CD8-positive, alpha-beta T cell (primary cell): ENCODE measurements at regions of chr2 and their contacts with region 1.

Region 1: GRCh38 chr2:44244129-44244871 is 31.0 kb upstream of the SLC3A1 start:
- DNase-seq: peak; percentile 13 to 86 (median 54)
- ATAC-seq: peak; percentile 92
- H3K4me3 ChIP-seq: peak overlapping the region; percentile 12 to 57
- H3K4me3 Mint-ChIP-seq: peak overlapping the region; percentile 88
- H3K27ac ChIP-seq: peak overlapping the region in 1 of 2 experiments; percentile 26
- H3K27ac Mint-ChIP-seq: peak overlapping the region; percentile 69
- H3K4me1 ChIP-seq: peaks cover 12% of the 10 kb centered on the region
- H3K4me1 Mint-ChIP-seq: peaks cover 33% of the 10 kb centered on the region
- H3K27me3 ChIP-seq: no peaks in the 10 kb centered on the region
- H3K27me3 Mint-ChIP-seq: no peaks in the 10 kb centered on the region
- CTCF ChIP-seq: peak; percentile 86

Region 2: DNA sequence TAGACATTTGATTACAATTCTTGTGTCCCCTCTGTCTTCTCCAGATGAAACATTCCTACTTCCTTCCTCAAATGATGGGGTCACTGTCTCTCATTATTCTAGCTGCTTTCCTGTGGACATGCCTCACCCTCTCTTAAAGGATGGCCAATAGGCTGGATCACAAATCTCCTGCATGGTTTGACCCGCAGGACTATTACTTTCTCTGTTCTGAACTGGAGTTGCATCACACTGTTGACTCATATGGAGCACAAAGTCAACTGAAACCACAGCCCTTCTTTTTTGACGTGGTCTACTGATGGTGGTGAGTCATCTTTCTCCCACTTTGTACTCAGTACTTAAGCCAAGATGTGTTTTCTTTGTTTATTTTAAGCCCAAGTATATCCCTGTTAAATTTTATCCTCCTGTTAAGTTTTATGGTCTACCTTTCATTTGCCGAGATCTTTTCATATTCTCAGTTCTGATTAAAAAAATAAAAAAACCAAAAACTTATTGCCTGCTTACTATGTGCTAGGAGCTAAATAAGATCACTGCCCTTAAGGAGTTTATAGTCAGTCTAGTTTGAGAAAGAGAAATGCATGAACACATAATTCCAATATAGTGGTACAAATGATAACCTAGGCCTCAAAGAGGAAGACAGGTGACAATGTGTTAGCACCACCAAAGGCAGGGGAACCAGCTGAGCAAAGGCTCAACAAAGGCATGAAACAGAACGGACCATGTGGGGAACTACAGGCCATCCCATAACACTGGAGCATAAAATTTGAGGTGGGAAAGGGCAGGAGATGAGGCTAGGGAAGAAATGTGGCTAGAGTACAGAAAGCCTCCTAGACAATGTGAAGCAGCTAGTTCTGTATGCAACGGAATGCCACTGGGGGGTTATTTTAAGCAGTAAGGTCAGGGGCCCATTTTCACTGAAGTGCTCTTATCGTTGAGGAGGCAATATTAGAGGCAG is 950.3 kb before region 1 on chr2:
- CTCF ChIA-PET with region 1: no interaction called
- POLR2A ChIA-PET with region 1: no interaction called
- intact Hi-C with region 1: no loop called
- DNase-seq: peak in 6 of 9 experiments; percentile 7 to 62 (median 40)
- ATAC-seq: peak; percentile 80
- H3K4me3 ChIP-seq: no peak overlapping the region
- H3K4me3 Mint-ChIP-seq: no peak overlapping the region
- H3K27ac ChIP-seq: no peak overlapping the region
- H3K27ac Mint-ChIP-seq: no peak overlapping the region
- H3K4me1 ChIP-seq: no peaks in the 10 kb centered on the region
- H3K4me1 Mint-ChIP-seq: peaks cover 14% of the 10 kb centered on the region
- H3K27me3 ChIP-seq: no peaks in the 10 kb centered on the region
- H3K27me3 Mint-ChIP-seq: no peaks in the 10 kb centered on the region
- CTCF ChIP-seq: no peak

Region 3: GRCh38 chr2:44291281-44292248 is 47.3 kb after region 1 on chr2:
- CTCF ChIA-PET with region 1: interaction called, 7 read pairs
- POLR2A ChIA-PET with region 1: no interaction called
- intact Hi-C with region 1: loop called in 1 of 2 experiments (anchors 10 kb)
- DNase-seq: peak in 2 of 9 experiments; percentile 6 to 21
- ATAC-seq: no peak
- H3K4me3 ChIP-seq: no peak overlapping the region
- H3K4me3 Mint-ChIP-seq: no peak overlapping the region
- H3K27ac ChIP-seq: no peak overlapping the region
- H3K27ac Mint-ChIP-seq: no peak overlapping the region
- H3K4me1 ChIP-seq: no peaks in the 10 kb centered on the region
- H3K4me1 Mint-ChIP-seq: peaks cover 9% of the 10 kb centered on the region
- H3K27me3 ChIP-seq: no peaks in the 10 kb centered on the region
- H3K27me3 Mint-ChIP-seq: peaks cover 11% of the 10 kb centered on the region
- CTCF ChIP-seq: no peak

Region 4: DNA sequence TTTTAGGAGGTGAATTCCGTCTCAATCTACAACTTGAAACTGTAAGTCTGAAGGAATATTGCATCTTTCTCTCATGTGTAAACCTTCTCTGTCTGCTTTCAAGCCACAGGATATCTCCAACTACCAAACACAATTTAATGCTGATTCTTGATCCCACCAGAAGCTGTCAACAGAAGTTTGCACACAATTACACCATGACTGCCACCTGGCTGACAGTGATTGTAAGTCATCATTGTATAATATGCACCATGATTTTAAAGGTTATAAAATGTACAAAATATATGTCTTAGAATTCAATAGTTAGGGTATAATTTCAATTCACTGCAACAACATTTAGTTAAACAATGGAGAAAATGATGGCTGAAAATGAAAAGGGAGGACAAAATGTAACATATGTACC is 98.6 kb after region 1 on chr2:
- CTCF ChIA-PET with region 1: interaction called, 9 read pairs
- POLR2A ChIA-PET with region 1: no interaction called
- intact Hi-C with region 1: loop called (anchors 1 to 5 kb)
- DNase-seq: peak in 4 of 9 experiments; percentile 25 to 62 (median 48)
- ATAC-seq: peak; percentile 62
- H3K4me3 ChIP-seq: no peak overlapping the region
- H3K4me3 Mint-ChIP-seq: no peak overlapping the region
- H3K27ac ChIP-seq: no peak overlapping the region
- H3K27ac Mint-ChIP-seq: no peak overlapping the region
- H3K4me1 ChIP-seq: no peaks in the 10 kb centered on the region
- H3K4me1 Mint-ChIP-seq: peaks cover 2% of the 10 kb centered on the region
- H3K27me3 ChIP-seq: no peaks in the 10 kb centered on the region
- H3K27me3 Mint-ChIP-seq: no peaks in the 10 kb centered on the region
- CTCF ChIP-seq: peak; percentile 61

Region 5: GRCh38 chr2:44897406-44897805 is 653.1 kb after region 1 on chr2:
- CTCF ChIA-PET with region 1: no interaction called
- POLR2A ChIA-PET with region 1: no interaction called
- intact Hi-C with region 1: no loop called
- DNase-seq: no peak
- ATAC-seq: no peak
- H3K4me3 ChIP-seq: no peak overlapping the region
- H3K4me3 Mint-ChIP-seq: no peak overlapping the region
- H3K27ac ChIP-seq: no peak overlapping the region
- H3K27ac Mint-ChIP-seq: no peak overlapping the region
- H3K4me1 ChIP-seq: no peaks in the 10 kb centered on the region
- H3K4me1 Mint-ChIP-seq: no peaks in the 10 kb centered on the region
- H3K27me3 ChIP-seq: no peaks in the 10 kb centered on the region
- H3K27me3 Mint-ChIP-seq: peaks cover 17% of the 10 kb centered on the region
- CTCF ChIP-seq: no peak

Region 6: DNA sequence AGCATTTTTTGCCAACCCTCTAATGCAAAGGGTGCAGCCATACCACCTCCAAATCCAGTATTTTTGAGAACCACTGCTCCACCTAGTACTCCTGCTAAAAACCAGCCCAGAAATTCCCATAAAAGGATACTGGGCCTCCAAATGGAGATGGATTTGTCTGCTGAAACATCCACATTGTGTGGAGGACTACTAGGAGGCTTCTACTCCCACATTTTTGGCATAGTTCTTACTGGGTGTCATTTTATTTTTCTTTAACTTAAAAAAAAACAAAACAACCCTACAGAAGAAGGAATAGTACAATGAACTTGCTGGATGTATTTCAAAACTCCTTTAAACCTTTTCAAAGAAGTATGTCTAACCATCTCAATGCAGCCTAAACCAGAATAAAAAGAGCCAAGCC is 1147.6 kb after region 1 on chr2:
- CTCF ChIA-PET with region 1: no interaction called
- POLR2A ChIA-PET with region 1: no interaction called
- intact Hi-C with region 1: no loop called
- DNase-seq: no peak
- ATAC-seq: no peak
- H3K4me3 ChIP-seq: no peak overlapping the region
- H3K4me3 Mint-ChIP-seq: no peak overlapping the region
- H3K27ac ChIP-seq: no peak overlapping the region
- H3K27ac Mint-ChIP-seq: no peak overlapping the region
- H3K4me1 ChIP-seq: no peaks in the 10 kb centered on the region
- H3K4me1 Mint-ChIP-seq: no peaks in the 10 kb centered on the region
- H3K27me3 ChIP-seq: no peaks in the 10 kb centered on the region
- H3K27me3 Mint-ChIP-seq: no peaks in the 10 kb centered on the region
- CTCF ChIP-seq: no peak